ENCODE measurements at regions of chr12 and their contacts with region 1.

Region 1: DNA sequence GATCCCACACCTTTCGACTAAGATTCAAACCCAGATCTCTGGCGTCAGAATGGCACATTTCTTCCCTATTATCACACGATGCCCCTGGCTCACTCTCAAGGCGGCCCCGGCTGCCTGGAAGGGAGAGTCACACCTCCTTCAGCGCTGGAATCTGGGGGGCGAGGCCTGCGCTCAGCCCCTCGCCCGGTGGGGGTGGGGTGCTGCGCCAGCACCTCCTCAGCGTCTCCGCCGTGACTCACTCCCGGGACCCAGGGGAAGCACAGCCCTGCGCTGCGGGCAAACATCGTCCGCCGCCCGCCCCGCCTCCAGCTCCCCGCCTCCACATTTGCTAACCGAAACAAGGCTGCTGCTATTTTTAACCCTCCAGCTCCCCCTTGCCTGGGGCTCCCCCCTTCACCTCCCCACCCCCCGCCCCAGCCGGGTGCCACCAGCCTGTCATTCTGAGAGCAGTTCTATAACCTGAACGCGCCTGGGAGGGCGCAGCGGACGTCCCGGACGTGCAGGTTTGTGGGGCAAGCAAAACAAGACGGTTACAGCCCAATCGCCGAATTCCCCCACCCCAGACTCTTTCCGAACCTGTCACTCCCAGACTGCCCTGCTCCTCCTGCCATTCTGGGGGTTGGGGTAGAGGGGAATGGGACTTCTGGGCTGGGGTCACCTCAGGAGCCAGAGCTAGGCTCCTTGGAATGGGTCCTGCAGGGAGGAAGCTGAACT is 6.7 kb downstream of the HDAC7 start:
- DNase-seq: peak; percentile 93
- CTCF ChIP-seq: no peak

Region 2: DNA sequence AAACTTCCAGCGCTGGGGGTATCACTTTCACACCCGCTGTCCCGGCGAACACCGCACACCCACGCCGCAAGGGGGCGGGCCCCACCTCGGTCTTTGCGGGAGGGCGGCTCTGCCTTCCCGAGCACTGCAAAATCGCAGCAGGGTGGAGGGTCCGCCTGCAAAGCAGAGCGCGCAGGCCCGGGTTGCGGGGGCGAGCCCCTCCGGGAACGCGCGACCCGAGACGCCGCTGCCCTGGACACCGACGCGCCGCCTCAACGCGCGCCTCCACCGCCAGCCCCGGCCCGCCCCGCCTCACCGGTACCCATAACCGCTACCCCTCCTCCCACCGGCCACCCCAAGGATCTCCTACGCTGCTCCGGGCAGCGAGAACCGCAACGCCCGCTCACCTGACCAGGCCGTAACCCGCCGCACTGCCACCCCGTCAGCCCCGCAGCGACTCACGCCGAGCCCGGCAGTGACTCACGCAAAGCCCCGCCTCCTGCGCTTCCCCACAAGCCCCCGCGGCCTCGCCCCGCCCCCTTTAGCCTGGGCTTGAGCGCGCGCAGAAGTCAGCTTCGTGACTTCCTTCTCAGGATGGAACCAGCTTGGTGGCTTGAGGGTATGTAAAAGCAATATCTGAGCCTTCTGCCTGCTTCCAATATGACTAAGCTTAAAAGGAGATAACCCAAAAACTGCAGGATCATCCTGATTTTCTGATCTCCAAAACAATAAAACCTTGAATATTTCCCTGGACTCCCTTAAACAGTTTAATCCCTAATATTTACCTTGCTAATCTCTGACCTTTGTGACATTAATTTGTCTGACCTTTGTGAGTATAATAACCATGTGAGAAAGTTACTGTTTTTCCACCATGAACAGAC is 107.2 kb before region 1 on chr12 and contains the start of gene RPAP3:
- CTCF ChIA-PET with region 1: no interaction called
- POLR2A ChIA-PET with region 1: no interaction called
- DNase-seq: peak; percentile 93
- CTCF ChIP-seq: peak; percentile 57

Region 3: GRCh38 chr12:47797441-47797840 is 15.5 kb before region 1 on chr12:
- CTCF ChIA-PET with region 1: interaction called, 28 read pairs
- POLR2A ChIA-PET with region 1: no interaction called
- DNase-seq: peak; percentile 74
- CTCF ChIP-seq: peak; percentile 57

Region 4: GRCh38 chr12:47828608-47829536 is 15.9 kb after region 1 on chr12:
- CTCF ChIA-PET with region 1: interaction called, 685 read pairs
- POLR2A ChIA-PET with region 1: interaction called, 12 read pairs
- DNase-seq: no peak
- CTCF ChIP-seq: no peak

Region 5: GRCh38 chr12:48454667-48455066 is 641.7 kb after region 1 on chr12:
- CTCF ChIA-PET with region 1: no interaction called
- POLR2A ChIA-PET with region 1: no interaction called
- DNase-seq: no peak
- CTCF ChIP-seq: peak; percentile 5

Measured in GM10248 (cell line).